Heart left ventricle (tissue), 16 donors: ENCODE measurements at regions of chr3 and their contacts with region 1.

Region 1: GRCh38 chr3:51391075-51391567 is at the start of gene RBM15B:
- DNase-seq: peak; percentile 98 to 100 (median 99)
- ATAC-seq: peak; percentile 93 to 97 (median 94)
- H3K4me3 ChIP-seq: peak within 1 kb of the TSS; percentile 57 to 90 (median 74)
- H3K27ac ChIP-seq: peak within 1 kb of the TSS; percentile 78 to 95 (median 89)
- H3K4me1 ChIP-seq: peaks cover 21 to 87% (median 69%) of the 10 kb centered on the region in 12 donors
- H3K27me3 ChIP-seq: no peaks in the 10 kb centered on the region
- CTCF ChIP-seq: peak in 9 of 12 donors; percentile 85 to 97 (median 91)
- POLR2A ChIP-seq: peak in 1 of 2 donors; percentile 70
- total RNA-seq, gene RBM15B: 12.7 to 21.5 (median 16.2) TPM

Region 2: DNA sequence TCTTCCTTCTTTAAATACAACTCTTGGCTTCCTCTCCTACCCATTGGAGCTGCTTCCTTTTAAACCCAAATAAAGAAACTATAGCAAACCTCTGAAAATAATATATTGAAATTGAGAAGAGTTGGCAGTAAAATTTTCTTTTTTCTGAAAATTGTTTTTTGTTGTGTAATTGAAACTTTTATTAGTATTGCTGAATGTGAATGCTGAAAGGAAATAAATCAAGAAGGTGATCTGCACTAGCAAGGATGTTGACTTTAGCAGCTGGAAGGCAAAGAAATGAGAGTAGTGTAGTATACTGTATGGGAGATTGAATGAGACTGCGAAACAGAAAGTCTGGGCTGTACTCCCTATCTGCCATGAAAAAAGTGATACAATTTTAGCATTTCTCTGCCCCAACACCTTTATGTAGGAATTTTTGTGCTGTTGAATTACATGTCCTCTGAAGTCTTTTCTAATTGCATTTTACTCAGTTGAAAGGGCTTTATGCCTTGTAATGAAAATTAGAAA is 550.1 kb before region 1 on chr3:
- intact Hi-C with region 1: no loop called
- DNase-seq: no peak
- ATAC-seq: no peak
- H3K4me3 ChIP-seq: no peak overlapping the region
- H3K27ac ChIP-seq: no peak overlapping the region
- H3K4me1 ChIP-seq: no peaks in the 10 kb centered on the region
- H3K27me3 ChIP-seq: no peaks in the 10 kb centered on the region
- CTCF ChIP-seq: no peak
- POLR2A ChIP-seq: no peak

Region 3: GRCh38 chr3:51434746-51435327 is 43.7 kb after region 1 on chr3:
- intact Hi-C with region 1: loop called in 3 of 10 experiments (anchors 2 to 5 kb)
- DNase-seq: peak in 3 of 5 donors; percentile 16 to 30 (median 29)
- ATAC-seq: peak; percentile 61 to 80 (median 75)
- H3K4me3 ChIP-seq: no peak overlapping the region
- H3K27ac ChIP-seq: no peak overlapping the region
- H3K4me1 ChIP-seq: peaks cover 0 to 4% (median 0%) of the 10 kb centered on the region in 12 donors
- H3K27me3 ChIP-seq: no peaks in the 10 kb centered on the region
- CTCF ChIP-seq: peak; percentile 37 to 76 (median 62)
- POLR2A ChIP-seq: no peak

Region 4: GRCh38 chr3:51670823-51671733 is 280.0 kb after region 1 on chr3 and contains the start of gene TEX264:
- intact Hi-C with region 1: loop called in 6 of 10 experiments (anchors 5 to 10 kb)
- DNase-seq: peak; percentile 91 to 97 (median 94)
- ATAC-seq: peak; percentile 63 to 95 (median 91)
- H3K4me3 ChIP-seq: peak within 1 kb of the TSS; percentile 72 to 97 (median 86)
- H3K27ac ChIP-seq: peak within 1 kb of the TSS; percentile 84 to 99 (median 96)
- H3K4me1 ChIP-seq: peaks cover 2 to 64% (median 36%) of the 10 kb centered on the region in 12 donors
- H3K27me3 ChIP-seq: no peaks in the 10 kb centered on the region
- CTCF ChIP-seq: no peak
- POLR2A ChIP-seq: peak in 1 of 2 donors; percentile 89
- total RNA-seq, gene TEX264: 29.5 to 64.0 (median 36.9) TPM

Region 5: DNA sequence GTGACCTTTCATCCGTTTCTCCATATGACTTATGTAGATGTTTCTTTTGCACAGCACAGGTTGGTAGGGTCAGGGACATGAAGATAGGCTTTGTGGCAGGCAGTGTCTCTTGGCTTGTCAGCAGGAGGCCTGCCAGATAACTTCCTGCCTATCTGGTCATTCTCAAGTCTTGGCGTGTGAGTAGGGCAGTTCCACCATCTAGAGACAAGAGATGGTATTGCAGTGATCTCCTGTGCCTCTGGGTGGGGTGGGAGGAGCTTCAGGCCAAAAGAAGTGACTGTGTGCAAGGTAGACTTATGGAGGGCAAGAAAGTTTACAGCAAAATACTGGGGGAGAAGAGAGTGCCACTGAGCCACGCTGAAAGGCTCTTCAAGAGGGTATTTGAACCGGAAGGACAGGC is 291.0 kb after region 1 on chr3:
- intact Hi-C with region 1: loop called in 8 of 10 experiments (anchors 5 to 10 kb)
- DNase-seq: peak; percentile 25 to 81 (median 78)
- ATAC-seq: peak; percentile 71 to 76 (median 72)
- H3K4me3 ChIP-seq: peak overlapping the region in 1 of 12 donors; percentile 17
- H3K27ac ChIP-seq: peak overlapping the region in 10 of 12 donors; percentile 27 to 92 (median 58)
- H3K4me1 ChIP-seq: peaks cover 22 to 93% (median 79%) of the 10 kb centered on the region in 12 donors
- H3K27me3 ChIP-seq: no peaks in the 10 kb centered on the region
- CTCF ChIP-seq: peak; percentile 70 to 83 (median 79)
- POLR2A ChIP-seq: no peak